Ascending aorta (tissue), 2 donors: ENCODE measurements at regions of chr1 and their contacts with region 1.

Region 1: DNA sequence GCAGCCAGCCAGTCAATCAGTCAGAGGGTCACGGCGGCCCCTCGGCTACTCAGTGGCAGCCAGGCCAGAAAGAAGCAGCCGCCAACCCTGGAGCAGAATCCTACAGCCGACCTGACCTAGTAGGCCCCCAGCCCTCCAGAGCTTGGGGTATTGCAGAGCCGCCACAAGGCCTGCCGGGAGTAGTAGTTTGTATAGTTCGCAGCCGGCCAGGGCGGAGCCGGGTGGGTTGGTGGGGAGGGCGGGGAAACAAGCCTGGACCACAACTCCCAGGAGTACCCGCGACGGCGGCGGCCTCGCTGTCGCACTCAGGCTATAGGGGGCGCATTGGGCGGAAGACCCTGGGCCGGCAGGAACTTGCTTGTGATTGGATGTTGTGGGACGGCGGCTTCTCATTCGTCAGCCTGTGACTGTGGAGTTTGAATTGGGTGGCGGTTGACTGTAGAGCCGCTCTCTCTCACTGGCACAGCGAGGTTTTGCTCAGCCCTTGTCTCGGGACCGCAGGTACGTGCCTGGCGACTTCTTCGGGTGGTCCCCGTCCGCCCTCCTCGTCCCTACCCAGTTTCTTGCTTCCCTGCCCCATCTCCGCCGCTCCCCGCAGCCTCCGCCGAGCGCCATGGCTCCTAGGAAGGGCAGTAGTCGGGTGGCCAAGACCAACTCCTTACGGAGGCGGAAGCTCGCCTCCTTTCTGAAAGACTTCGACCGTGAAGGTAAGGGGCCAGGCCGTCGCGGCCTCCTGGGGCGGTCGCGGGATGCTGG is at the start of gene CDCA8:
- DNase-seq: peak; percentile 93 to 99
- H3K4me3 ChIP-seq: peak within 1 kb of the TSS; percentile 72 to 80
- H3K27ac ChIP-seq: peak within 1 kb of the TSS; percentile 82 to 92
- H3K4me1 ChIP-seq: peaks cover 13 to 22% of the 10 kb centered on the region in 2 donors
- H3K27me3 ChIP-seq: no peaks in the 10 kb centered on the region
- CTCF ChIP-seq: peak; percentile 36 to 61 (median 54)
- total RNA-seq, gene CDCA8: 0.75 TPM

Region 2: DNA sequence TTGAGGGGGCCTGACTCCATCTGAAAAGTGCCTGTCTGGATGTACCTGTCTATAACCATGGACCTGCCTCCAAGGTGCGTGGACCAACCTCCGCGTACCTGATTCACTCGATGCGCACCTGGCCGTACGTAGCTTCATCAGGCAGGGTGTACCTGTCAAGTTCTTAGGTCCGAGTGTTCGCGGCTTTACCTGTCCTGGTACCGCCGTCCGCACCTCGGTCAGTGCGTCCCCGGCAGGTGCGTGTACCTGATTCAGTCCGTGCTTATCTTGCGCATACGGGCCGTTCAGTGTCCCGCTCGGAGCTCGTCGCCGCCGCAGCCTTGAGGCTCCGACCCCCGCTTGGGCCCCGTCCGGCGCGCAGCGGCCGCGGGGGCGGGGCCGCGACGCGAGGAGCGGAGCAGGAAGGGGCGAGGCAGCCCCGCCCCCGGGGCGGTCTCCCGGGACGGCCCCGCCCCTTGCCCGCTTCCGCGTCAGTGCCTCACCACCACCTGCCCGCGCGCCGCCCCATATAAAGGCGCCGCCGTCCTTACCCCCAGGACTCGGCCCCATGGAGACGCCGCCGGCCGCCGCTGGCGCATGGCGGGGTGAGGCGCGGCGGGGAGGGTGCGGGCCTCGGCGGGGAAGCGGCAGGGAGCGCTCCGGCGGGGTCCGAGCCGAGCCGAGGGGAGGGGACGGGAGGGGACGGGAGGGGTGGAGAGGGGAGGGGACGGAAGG is 218.1 kb before region 1 on chr1 and contains the start of gene ZC3H12A:
- intact Hi-C with region 1: loop called (anchors 5 kb)
- DNase-seq: peak; percentile 78 to 96
- H3K4me3 ChIP-seq: peak within 1 kb of the TSS; percentile 81 to 95
- H3K27ac ChIP-seq: peak within 1 kb of the TSS; percentile 99
- H3K4me1 ChIP-seq: peaks cover 42 to 69% of the 10 kb centered on the region in 2 donors
- H3K27me3 ChIP-seq: no peaks in the 10 kb centered on the region
- CTCF ChIP-seq: no peak
- total RNA-seq, gene ZC3H12A: 12.8 TPM

Region 3: DNA sequence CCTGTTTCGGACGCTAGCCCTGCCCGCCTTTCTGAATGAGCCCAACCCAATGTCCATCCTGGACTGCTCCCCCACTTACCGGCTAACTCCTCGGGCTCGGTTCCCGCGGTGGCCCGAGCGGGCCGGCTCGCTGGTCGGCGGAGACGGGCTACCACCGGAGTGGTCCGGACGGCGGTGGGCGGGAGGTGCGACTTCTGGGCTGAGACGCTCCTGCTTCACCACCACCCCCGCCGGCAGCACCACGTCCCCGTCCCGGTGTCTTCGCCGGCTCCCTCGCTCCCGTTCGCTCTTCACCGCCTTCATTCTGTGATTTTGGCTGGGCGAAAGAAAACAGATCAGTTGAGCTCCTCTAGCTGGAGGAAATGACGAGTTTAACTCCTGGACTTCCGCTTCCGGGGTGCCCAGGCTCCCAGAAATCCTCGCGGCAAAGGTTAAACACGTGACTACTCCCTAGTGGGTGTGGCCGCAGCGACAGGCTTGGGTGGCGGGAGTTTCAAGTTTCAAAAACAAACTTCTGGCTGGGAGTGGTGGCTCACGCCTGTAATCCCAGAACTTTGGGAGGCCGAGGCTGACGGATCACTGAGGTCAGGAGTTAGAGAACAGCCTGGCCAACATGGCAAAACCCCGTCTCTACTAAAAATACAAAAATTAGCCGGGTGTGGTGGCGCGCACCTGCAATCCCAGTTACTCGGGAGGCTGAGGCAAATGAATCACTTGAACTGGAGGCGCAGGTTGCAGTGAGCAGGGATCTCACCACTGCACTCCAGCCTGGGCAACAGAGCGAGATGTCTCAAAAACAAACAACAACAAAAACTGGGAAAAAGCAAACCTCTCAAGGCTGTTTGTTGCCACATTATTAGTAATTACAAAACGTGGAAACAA is 138.1 kb before region 1 on chr1 and contains the start of gene SNIP1:
- intact Hi-C with region 1: loop called (anchors 5 kb)
- DNase-seq: peak; percentile 68 to 96
- H3K4me3 ChIP-seq: peak within 1 kb of the TSS; percentile 90 to 94
- H3K27ac ChIP-seq: peak within 1 kb of the TSS; percentile 87 to 90
- H3K4me1 ChIP-seq: peaks cover 12 to 24% of the 10 kb centered on the region in 2 donors
- H3K27me3 ChIP-seq: no peaks in the 10 kb centered on the region
- CTCF ChIP-seq: no peak
- total RNA-seq, gene SNIP1: 14.4 TPM

Region 4: GRCh38 chr1:37807555-37808368 is 115.5 kb after region 1 on chr1 and contains the starts of genes C1orf122 and YRDC:
- intact Hi-C with region 1: loop called (anchors 1 kb)
- DNase-seq: peak; percentile 65 to 97
- H3K4me3 ChIP-seq: peak within 1 kb of the TSS; percentile 90 to 92
- H3K27ac ChIP-seq: peak within 1 kb of the TSS; percentile 98 to 99
- H3K4me1 ChIP-seq: peaks cover 6 to 15% of the 10 kb centered on the region in 2 donors
- H3K27me3 ChIP-seq: no peaks in the 10 kb centered on the region
- CTCF ChIP-seq: no peak
- total RNA-seq, gene C1orf122: 284 TPM
- total RNA-seq, gene YRDC: 9.7 TPM

Region 5: GRCh38 chr1:37840711-37841110 is 148.5 kb after region 1 on chr1:
- intact Hi-C with region 1: no loop called
- DNase-seq: no peak
- H3K4me3 ChIP-seq: no peak overlapping the region
- H3K27ac ChIP-seq: no peak overlapping the region
- H3K4me1 ChIP-seq: no peaks in the 10 kb centered on the region
- H3K27me3 ChIP-seq: no peaks in the 10 kb centered on the region
- CTCF ChIP-seq: no peak

Region 6: DNA sequence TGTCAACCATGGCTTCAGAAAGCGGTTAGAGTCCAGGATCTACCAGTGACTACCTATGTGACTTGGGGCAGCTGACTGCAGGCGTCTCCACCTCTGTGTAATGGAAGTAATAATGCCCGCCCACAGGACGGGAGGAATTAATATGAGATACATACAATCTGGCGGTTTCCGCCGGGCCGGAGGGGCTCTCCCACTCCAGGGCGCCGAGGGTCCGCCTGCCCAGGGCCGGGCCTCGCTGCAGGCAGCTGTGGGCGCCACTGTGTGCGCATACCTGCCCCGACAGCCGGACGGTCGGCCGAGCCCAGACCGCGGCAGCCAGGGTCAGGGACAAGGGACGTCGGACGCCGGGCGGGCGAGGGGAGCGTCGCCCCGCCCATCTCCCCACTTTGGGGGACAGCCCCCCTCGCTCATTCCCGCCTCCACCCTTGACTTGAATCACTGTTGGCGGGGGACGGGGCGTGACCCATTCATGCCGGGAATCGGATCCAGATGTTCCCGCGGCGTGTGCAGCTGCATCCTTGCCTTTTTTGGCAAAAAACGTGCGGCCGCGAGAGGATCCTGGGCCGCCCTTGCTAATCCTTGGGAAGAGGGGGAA is 303.6 kb after region 1 on chr1:
- intact Hi-C with region 1: loop called (anchors 5 kb)
- DNase-seq: peak in 1 of 2 donors; percentile 91
- H3K4me3 ChIP-seq: peak overlapping the region; percentile 64 to 78
- H3K27ac ChIP-seq: peak overlapping the region; percentile 93 to 96
- H3K4me1 ChIP-seq: peaks cover 20 to 46% of the 10 kb centered on the region in 2 donors
- H3K27me3 ChIP-seq: no peaks in the 10 kb centered on the region
- CTCF ChIP-seq: no peak

Region 7: GRCh38 chr1:38046884-38047602 is 354.8 kb after region 1 on chr1:
- intact Hi-C with region 1: loop called (anchors 1 kb)
- DNase-seq: peak; percentile 64 to 92
- H3K4me3 ChIP-seq: peak overlapping the region; percentile 67 to 82
- H3K27ac ChIP-seq: peak overlapping the region; percentile 69 to 70
- H3K4me1 ChIP-seq: peaks cover 13 to 19% of the 10 kb centered on the region in 2 donors
- H3K27me3 ChIP-seq: peaks cover 25% of the 10 kb centered on the region
- CTCF ChIP-seq: peak in 2 of 3 experiments; percentile 3 to 13